GM12878 (cell line): ENCODE measurements at regions of chr3 and their contacts with region 1.

Region 1: DNA sequence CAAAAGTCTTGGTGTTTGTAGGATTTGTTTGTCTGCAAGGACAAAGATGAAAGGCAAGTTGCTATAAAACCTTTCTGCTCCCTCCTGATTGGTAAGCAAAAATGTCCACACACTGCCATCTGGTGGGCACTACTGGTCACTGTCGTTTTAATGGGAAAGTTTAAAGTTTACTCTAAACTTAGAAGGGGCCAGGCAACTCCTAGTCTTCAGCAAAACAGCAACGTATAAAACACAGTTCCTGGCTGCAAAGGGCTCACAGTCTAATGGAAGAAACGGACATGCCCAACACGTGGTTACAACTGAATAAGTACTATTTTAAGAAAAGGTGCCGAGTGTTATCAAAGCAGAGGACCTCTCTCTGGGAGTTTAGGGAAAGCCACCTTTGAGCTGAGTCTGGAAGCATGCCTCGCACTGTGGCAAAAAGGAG is 23.7 kb upstream of the TPRG1 start:
- DNase-seq: no peak
- ATAC-seq: peak; percentile 87
- H3K4me3 ChIP-seq: no peak overlapping the region
- H3K27ac ChIP-seq: no peak overlapping the region
- H3K4me1 ChIP-seq: no peaks in the 10 kb centered on the region
- H3K27me3 ChIP-seq: peaks cover 0 to 5% of the 10 kb centered on the region in 2 experiments; a peak in 2 of 4 replicates
- CTCF ChIP-seq: peak; percentile 59 to 75 (median 73)
- EP300 ChIP-seq: no peak
- POLR2A ChIP-seq: no peak
- RAD21 ChIP-seq: peak; percentile 80

Region 2: DNA sequence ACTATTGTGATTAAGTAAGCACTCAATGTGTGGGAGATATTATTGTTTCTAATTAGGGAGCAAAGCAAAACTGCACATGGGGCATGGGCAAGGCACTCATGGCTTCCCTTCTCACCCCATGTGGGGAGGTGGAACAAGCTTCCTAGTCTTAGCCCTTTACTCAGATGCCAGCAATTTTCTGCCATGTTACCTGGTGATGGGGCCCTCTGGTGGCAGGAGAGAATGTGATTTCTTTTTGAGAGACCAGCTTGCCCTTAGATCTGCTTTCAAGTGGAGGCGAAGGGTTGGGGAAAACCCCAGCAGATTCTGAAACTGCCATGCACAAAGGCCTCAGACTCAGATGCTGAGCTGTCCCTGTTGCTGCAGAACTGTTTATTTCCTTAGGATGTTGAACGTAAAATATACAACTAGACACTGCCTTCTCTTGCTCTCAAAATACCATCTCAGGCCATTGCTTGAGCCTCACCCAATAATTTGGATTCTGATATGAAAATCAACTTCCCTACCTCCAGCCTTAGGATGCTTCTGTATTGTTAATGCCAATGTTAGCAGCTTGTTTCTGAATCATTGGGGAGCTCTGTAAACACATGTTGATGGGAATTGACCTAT is 106.5 kb before region 1 on chr3:
- CTCF ChIA-PET with region 1: interaction called, 3 read pairs
- POLR2A ChIA-PET with region 1: no interaction called
- RAD21 ChIA-PET with region 1: no interaction called
- SMC1A ChIA-PET with region 1: no interaction called
- in situ Hi-C with region 1: no loop called
- intact Hi-C with region 1: loop called (anchors 5 kb)
- DNase-seq: peak; percentile 19
- ATAC-seq: peak; percentile 100
- H3K4me3 ChIP-seq: no peak overlapping the region
- H3K27ac ChIP-seq: no peak overlapping the region
- H3K4me1 ChIP-seq: no peaks in the 10 kb centered on the region
- H3K27me3 ChIP-seq: no peaks in the 10 kb centered on the region; a peak in 1 of 4 replicates
- CTCF ChIP-seq: peak; percentile 50 to 68 (median 64)
- EP300 ChIP-seq: no peak
- POLR2A ChIP-seq: no peak
- RAD21 ChIP-seq: peak; percentile 54

Region 3: GRCh38 chr3:189186101-189186500 is 38.0 kb after region 1 on chr3:
- CTCF ChIA-PET with region 1: no interaction called
- POLR2A ChIA-PET with region 1: no interaction called
- RAD21 ChIA-PET with region 1: no interaction called
- SMC1A ChIA-PET with region 1: no interaction called
- in situ Hi-C with region 1: no loop called
- intact Hi-C with region 1: no loop called
- DNase-seq: no peak
- ATAC-seq: no peak
- H3K4me3 ChIP-seq: no peak overlapping the region
- H3K27ac ChIP-seq: no peak overlapping the region
- H3K4me1 ChIP-seq: no peaks in the 10 kb centered on the region
- H3K27me3 ChIP-seq: no peaks in the 10 kb centered on the region
- CTCF ChIP-seq: no peak
- EP300 ChIP-seq: no peak
- POLR2A ChIP-seq: no peak
- RAD21 ChIP-seq: no peak